Esophagus muscularis mucosa (tissue), 4 donors: ENCODE measurements at regions of chr2 and their contacts with region 1.

Region 1: DNA sequence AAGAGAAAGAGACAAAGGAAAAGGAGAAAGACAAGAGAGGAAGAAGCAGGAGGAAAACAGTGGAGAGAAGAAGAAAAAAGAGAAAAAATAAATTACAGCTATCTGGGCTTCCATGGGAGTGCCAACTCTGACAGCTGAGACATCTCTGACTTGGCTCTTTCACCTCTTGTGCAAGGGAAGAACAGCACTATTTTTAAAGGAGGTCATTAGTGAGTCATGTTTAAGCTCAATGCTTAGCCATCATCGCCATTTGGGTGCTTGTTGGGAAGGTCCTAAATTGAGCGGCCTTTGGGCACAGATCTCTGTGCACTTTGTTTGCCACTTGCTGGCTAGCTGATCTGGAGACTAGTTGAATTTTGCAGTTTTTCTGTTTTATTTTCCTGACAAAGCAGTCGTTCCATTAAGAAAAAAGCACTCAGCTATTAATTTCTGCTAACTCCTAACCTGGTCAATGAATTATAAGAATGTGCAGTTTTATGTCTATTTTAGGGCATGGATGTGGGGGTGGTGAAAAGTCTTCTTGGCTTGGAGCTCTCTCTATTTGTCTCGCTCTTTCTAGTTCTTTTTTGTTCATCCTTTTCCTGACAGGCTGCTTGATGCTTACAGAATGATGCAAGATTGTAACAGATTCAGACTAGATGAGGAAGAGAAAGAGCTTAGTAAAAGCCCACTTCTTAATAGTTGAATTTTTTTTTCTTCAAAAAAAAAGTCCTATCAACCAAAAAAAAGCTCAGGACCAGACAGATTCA is 231.5 kb downstream of the SLC8A1 start:
- DNase-seq: no peak
- H3K4me3 ChIP-seq: no peak overlapping the region
- H3K27ac ChIP-seq: peak overlapping the region; percentile 57 to 73 (median 68)
- H3K4me1 ChIP-seq: peaks cover 30 to 37% (median 35%) of the 10 kb centered on the region in 4 donors
- H3K27me3 ChIP-seq: no peaks in the 10 kb centered on the region
- CTCF ChIP-seq: no peak
- EP300 ChIP-seq: no peak
- POLR2A ChIP-seq: no peak

Region 2: GRCh38 chr2:40101131-40101575 is 119.2 kb before region 1 on chr2:
- intact Hi-C with region 1: loop called (anchors 10 kb)
- DNase-seq: no peak
- H3K4me3 ChIP-seq: no peak overlapping the region
- H3K27ac ChIP-seq: peak overlapping the region in 1 of 4 donors; percentile 22
- H3K4me1 ChIP-seq: peaks cover 15 to 54% (median 35%) of the 10 kb centered on the region in 4 donors
- H3K27me3 ChIP-seq: no peaks in the 10 kb centered on the region
- CTCF ChIP-seq: no peak
- EP300 ChIP-seq: no peak
- POLR2A ChIP-seq: no peak

Region 3: DNA sequence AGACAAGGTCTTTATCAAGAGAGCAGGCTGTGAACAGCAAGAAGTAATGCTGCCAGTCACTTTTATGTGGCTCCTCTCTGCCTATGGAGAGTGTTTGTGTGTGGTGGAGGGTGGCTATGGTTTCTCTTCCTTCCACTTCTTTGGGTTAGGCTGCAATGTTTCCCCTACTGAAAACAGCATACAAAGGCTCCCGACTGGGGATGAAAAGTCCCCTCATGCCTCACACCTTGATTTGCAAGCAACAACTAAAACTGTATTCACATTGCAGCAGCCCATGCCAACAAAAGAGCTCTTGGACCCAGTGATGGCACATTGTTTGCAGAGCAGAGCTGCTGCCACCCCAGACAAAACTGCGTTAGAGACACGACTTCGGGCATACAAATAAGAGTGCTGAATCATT is 70.1 kb before region 1 on chr2:
- intact Hi-C with region 1: no loop called
- DNase-seq: peak; percentile 87
- H3K4me3 ChIP-seq: no peak overlapping the region
- H3K27ac ChIP-seq: no peak overlapping the region
- H3K4me1 ChIP-seq: peaks cover 0 to 15% (median 0%) of the 10 kb centered on the region in 4 donors
- H3K27me3 ChIP-seq: no peaks in the 10 kb centered on the region
- CTCF ChIP-seq: no peak
- EP300 ChIP-seq: no peak
- POLR2A ChIP-seq: no peak

Region 4: GRCh38 chr2:40511661-40512213 is 291.4 kb after region 1 on chr2:
- intact Hi-C with region 1: loop called (anchors 10 kb)
- DNase-seq: no peak
- H3K4me3 ChIP-seq: peak overlapping the region; percentile 47 to 60 (median 56)
- H3K27ac ChIP-seq: peak overlapping the region; percentile 75 to 82 (median 79)
- H3K4me1 ChIP-seq: peaks cover 0 to 41% (median 34%) of the 10 kb centered on the region in 4 donors
- H3K27me3 ChIP-seq: no peaks in the 10 kb centered on the region
- CTCF ChIP-seq: no peak
- EP300 ChIP-seq: no peak
- POLR2A ChIP-seq: no peak